SK-N-SH (cell line): ENCODE measurements at regions of chr17 and their contacts with region 1.

Region 1: DNA sequence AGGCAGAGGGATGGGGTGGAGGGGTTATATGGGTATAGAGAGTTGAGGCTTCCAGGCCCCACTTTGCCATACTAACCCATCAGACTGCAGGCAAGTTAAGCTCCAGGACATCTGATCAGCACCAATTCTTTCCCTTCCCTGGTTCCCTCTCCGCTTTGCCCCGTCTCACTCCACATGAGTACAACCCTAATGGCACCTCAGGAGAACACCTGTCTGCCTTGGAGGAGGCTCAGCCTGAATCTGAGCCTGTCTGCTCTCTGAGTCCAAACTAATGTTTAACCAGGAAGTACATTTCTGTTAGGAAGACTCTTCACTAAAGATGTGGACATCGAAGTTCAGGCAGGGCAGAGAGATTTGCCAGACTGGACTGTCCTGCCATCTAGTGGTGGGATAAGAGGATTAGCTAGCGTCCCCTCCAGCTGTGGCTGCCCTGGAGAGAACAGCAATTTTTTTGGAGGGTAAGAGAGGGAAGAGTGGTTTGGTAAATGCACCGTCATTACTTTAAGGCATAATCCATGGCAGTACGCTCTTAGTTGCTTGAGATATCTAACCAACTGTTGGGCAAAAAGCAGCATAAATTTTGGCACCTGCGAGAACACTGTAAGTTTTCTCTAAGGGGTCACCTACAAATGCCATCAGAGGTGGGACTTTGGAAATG is 29.2 kb upstream of the LRRC75A start:
- DNase-seq: peak; percentile 83
- H3K4me3 ChIP-seq: no peak overlapping the region; a peak in 1 of 4 replicates
- H3K27ac ChIP-seq: no peak overlapping the region
- H3K4me1 ChIP-seq: peaks cover 5 to 8% of the 10 kb centered on the region in 2 experiments; a peak in 2 of 4 replicates
- H3K27me3 ChIP-seq: no peaks in the 10 kb centered on the region; the same call in 1 of the 2 replicates
- CTCF ChIP-seq: peak; percentile 92
- EP300 ChIP-seq: no peak
- RAD21 ChIP-seq: peak; percentile 99

Region 2: GRCh38 chr17:16363749-16364536 is 157.3 kb before region 1 on chr17:
- CTCF ChIA-PET with region 1: interaction called, 40 read pairs
- POLR2A ChIA-PET with region 1: no interaction called
- DNase-seq: peak; percentile 74
- H3K4me3 ChIP-seq: no peak overlapping the region; a peak in 1 of 4 replicates
- H3K27ac ChIP-seq: no peak overlapping the region
- H3K4me1 ChIP-seq: peaks cover 0 to 6% of the 10 kb centered on the region in 2 experiments; a peak in 1 of 4 replicates
- H3K27me3 ChIP-seq: no peaks in the 10 kb centered on the region
- CTCF ChIP-seq: peak; percentile 97
- EP300 ChIP-seq: 0 out of 4 replicates have a peak, but pooled peaks of 1 of the 2 experiments have one; percentile 17
- RAD21 ChIP-seq: peak; percentile 75

Region 3: GRCh38 chr17:16407911-16408588 is 113.1 kb before region 1 on chr17:
- CTCF ChIA-PET with region 1: no interaction called
- POLR2A ChIA-PET with region 1: no interaction called
- DNase-seq: peak; percentile 76
- H3K4me3 ChIP-seq: peak overlapping the region in 1 of 2 experiments; percentile 20; a peak in 1 of 4 replicates
- H3K27ac ChIP-seq: peak overlapping the region; percentile 54 to 82
- H3K4me1 ChIP-seq: peaks cover 0 to 11% of the 10 kb centered on the region in 2 experiments; a peak in 1 of 4 replicates
- H3K27me3 ChIP-seq: no peaks in the 10 kb centered on the region
- CTCF ChIP-seq: no peak
- EP300 ChIP-seq: no peak
- RAD21 ChIP-seq: no peak

Region 4: DNA sequence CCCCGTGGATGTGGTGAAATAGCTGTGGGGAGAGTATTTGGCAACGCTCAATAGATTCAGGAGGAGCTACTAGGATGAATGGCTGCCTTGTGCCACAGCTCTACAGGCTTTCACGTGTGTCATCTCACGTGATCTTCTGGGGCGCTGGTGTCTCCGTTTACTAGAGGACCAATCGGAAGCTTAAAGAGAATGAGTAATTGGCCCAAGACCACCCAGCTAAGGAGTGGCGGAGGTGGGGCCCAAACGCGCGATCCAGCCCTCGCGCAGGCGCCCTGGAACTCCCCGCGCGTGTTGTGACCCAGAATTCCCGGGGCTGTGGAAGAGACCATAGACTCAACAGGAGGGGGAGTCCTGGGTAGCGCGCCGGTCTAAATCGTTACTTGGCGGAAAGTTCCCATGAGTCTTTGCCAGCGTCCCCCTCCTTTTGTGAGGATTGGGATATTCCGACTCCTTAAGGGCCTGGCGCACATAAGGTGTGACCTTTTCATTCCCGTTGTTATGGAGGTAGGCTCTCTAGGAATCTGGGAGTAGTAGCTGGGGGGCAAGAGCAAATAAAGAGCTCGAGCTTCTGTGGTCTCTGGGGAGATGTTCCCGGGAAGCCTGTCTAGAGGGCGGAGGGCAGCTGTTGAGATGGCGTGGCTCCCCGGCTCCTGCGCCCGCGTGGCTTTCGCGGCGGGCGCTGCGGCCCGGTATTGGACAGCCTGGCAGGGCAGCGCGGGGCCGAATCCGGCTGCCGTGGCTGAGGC is 82.5 kb before region 1 on chr17:
- CTCF ChIA-PET with region 1: interaction called, 746 read pairs
- POLR2A ChIA-PET with region 1: interaction called, 4 read pairs
- DNase-seq: peak; percentile 99
- H3K4me3 ChIP-seq: peak overlapping the region; percentile 87 to 98
- H3K27ac ChIP-seq: peak overlapping the region; percentile 76 to 88
- H3K4me1 ChIP-seq: peaks cover 25 to 30% of the 10 kb centered on the region in 2 experiments; a peak in 3 of 4 replicates
- H3K27me3 ChIP-seq: no peaks in the 10 kb centered on the region
- CTCF ChIP-seq: no peak
- EP300 ChIP-seq: peak in 1 of 2 experiments; percentile 65; a peak in 1 of 4 replicates
- RAD21 ChIP-seq: no peak

Region 5: GRCh38 chr17:16486373-16487250 is 34.6 kb before region 1 on chr17:
- CTCF ChIA-PET with region 1: interaction called, 22 read pairs
- POLR2A ChIA-PET with region 1: no interaction called
- DNase-seq: peak; percentile 81
- H3K4me3 ChIP-seq: no peak overlapping the region
- H3K27ac ChIP-seq: peak overlapping the region; percentile 51 to 94; a peak in 3 of 4 replicates
- H3K4me1 ChIP-seq: peaks cover 15 to 57% of the 10 kb centered on the region in 2 experiments; a peak in 2 of 4 replicates
- H3K27me3 ChIP-seq: no peaks in the 10 kb centered on the region
- CTCF ChIP-seq: no peak
- EP300 ChIP-seq: no peak
- RAD21 ChIP-seq: no peak

Region 6: DNA sequence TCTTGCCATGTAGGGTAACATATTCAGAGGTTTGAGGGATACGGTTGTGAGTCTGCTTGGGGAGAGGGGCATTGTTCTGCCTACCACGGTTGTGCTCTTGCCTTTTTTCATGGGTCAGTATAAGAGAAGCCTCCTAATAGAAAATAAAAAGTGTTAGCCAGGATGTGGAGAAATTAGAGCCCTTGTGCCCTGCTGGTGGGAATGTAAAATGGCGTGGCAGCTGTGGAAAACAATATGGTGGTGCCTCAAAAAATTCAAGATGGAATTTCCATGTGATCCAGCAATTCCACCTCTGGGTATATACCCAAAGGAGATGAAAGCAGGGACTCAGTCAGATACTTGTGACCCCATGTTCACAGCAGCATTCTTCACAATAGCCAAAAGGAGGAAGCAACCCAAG is 15.0 kb before region 1 on chr17:
- CTCF ChIA-PET with region 1: interaction called, 35 read pairs
- POLR2A ChIA-PET with region 1: no interaction called
- DNase-seq: no peak
- H3K4me3 ChIP-seq: no peak overlapping the region
- H3K27ac ChIP-seq: no peak overlapping the region
- H3K4me1 ChIP-seq: no peaks in the 10 kb centered on the region
- H3K27me3 ChIP-seq: no peaks in the 10 kb centered on the region
- CTCF ChIP-seq: peak; percentile 40; the same call in 1 of the 2 replicates
- EP300 ChIP-seq: no peak
- RAD21 ChIP-seq: no peak

Region 7: GRCh38 chr17:16568541-16569357 is 47.5 kb after region 1 on chr17 and contains the start of gene ZNF287:
- CTCF ChIA-PET with region 1: no interaction called
- POLR2A ChIA-PET with region 1: no interaction called
- DNase-seq: peak; percentile 98
- H3K4me3 ChIP-seq: peak within 1 kb of the TSS; percentile 81 to 87
- H3K27ac ChIP-seq: peak within 1 kb of the TSS in 1 of 2 experiments; percentile 72; a peak in 1 of 4 replicates
- H3K4me1 ChIP-seq: peaks cover 0 to 10% of the 10 kb centered on the region in 2 experiments; a peak in 2 of 4 replicates
- H3K27me3 ChIP-seq: no peaks in the 10 kb centered on the region; the same call in 1 of the 2 replicates
- CTCF ChIP-seq: no peak
- EP300 ChIP-seq: no peak
- RAD21 ChIP-seq: no peak
- polyA plus RNA-seq, gene ZNF287: 6.1 and 6.6 TPM in 2 replicates